OCI-LY7 (cell line): ENCODE measurements at regions of chr1 and their contacts with region 1.

Region 1: DNA sequence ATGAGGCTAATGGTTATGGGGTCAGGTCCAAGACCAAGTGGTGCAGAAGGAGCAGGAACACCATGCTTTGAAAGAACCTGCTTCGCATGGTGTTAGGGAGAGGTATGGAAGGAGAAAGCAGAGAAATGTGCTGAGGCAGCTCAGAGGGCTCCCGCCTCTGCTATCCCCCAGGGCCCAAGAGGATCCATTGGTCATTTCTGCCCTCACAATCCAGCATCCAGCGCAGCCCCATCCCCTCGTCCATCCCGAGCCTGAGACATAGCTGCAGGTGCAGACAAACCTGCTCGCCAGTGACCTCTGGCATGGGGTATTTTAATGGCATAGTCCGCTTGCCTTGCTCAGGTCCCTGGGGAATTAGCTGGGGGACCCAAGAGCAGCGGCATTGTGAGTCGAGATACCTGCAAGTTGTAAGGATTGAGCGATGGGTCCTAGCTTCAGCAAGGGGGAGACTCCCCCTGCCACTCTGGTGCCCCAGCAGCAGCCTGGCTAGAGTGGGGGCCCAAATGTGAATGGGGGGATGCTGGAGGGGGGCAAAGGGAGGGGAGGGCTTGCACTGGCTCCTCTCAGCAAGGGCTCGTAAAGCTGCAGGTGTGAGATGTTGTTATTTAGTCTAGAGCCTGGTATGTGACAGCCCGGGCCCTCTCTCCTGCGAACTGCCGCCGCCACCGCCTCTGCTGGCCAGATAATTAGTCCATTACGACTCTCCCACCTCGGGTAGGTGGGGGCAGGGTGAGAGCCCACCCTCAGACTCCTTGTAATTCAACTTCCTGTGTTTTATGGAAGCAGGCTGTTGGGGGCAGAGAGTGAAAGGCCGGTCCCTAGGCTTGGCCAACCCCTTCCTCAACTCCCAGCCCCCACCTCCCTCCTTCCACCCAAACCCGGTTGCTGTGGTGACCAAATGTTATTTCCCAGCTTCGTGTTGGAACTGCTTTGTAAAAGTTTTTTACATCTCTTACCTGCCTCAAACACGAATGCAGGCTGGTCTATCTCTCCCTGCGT is 118.8 kb downstream of the RNF220 start:
- DNase-seq: no peak
- H3K4me3 ChIP-seq: no peak overlapping the region
- H3K27ac ChIP-seq: no peak overlapping the region
- H3K4me1 ChIP-seq: no peaks in the 10 kb centered on the region
- CTCF ChIP-seq: no peak

Region 2: GRCh38 chr1:44249543-44249942 is 274.3 kb before region 1 on chr1:
- CTCF ChIA-PET with region 1: no interaction called
- POLR2A ChIA-PET with region 1: no interaction called
- intact Hi-C with region 1: no loop called
- DNase-seq: no peak
- H3K4me3 ChIP-seq: no peak overlapping the region
- H3K27ac ChIP-seq: no peak overlapping the region
- H3K4me1 ChIP-seq: no peaks in the 10 kb centered on the region
- CTCF ChIP-seq: no peak

Region 3: GRCh38 chr1:44417351-44418021 is 106.4 kb before region 1 on chr1:
- CTCF ChIA-PET with region 1: no interaction called
- POLR2A ChIA-PET with region 1: no interaction called
- intact Hi-C with region 1: no loop called
- DNase-seq: no peak
- H3K4me3 ChIP-seq: no peak overlapping the region
- H3K27ac ChIP-seq: no peak overlapping the region
- H3K4me1 ChIP-seq: no peaks in the 10 kb centered on the region
- CTCF ChIP-seq: no peak

Region 4: DNA sequence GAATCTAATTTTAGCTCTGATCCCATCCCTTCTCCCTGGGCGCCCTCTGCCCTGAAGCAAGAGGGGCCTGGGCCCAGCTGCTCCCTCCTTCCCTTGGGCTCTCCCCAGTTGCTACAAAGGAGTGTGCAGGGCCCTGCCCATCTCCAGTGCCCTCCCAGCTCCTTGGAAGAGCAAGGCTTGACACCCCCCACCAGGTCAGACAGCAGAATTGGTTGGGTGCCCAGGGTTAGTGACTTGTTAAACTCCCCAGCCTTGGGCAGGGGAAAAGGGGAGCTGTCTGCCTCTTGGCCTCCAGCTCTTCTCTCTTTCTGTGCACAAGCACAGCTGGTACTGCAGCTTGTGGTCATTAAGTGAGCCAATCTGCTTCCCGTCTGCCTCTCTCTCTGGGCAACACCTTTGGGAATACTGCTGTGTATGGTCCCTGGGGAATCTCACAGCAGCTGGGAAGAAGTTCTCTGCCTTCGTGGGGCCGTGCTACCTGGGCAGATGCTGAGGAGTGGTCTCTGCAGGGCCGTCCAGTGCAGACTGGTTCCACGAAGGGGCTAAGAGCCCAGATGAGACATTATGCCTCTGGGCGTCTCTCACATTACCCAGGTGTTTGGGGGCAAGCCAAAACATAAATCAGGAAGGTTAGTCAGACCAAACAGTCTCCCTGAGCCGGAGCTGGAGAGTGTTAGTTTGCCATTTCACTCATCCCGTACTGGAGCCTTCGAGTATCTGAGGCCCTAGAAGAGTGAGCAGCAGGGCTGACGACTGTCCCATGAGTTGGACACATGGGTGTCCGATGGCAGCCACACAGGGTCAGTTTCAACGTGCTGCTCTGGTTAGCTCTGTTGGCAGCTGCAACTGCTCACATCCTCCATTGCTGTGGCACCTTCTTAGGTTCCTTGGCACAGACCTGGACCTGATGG is 113.1 kb after region 1 on chr1:
- CTCF ChIA-PET with region 1: interaction called, 11 read pairs
- POLR2A ChIA-PET with region 1: no interaction called
- intact Hi-C with region 1: no loop called
- DNase-seq: no peak
- H3K4me3 ChIP-seq: no peak overlapping the region
- H3K27ac ChIP-seq: no peak overlapping the region
- H3K4me1 ChIP-seq: peaks cover 18% of the 10 kb centered on the region
- CTCF ChIP-seq: no peak